CD8-positive, alpha-beta T cell (primary cell): ENCODE measurements at regions of chr3 and their contacts with region 1.

Region 1: GRCh38 chr3:38346587-38347410 is at the start of gene XYLB:
- DNase-seq: peak; percentile 43 to 87 (median 71)
- ATAC-seq: peak; percentile 95
- H3K4me3 ChIP-seq: peak within 1 kb of the TSS; percentile 51 to 83
- H3K4me3 Mint-ChIP-seq: peak within 1 kb of the TSS; percentile 85
- H3K27ac ChIP-seq: peak within 1 kb of the TSS in 1 of 2 experiments; percentile 33
- H3K27ac Mint-ChIP-seq: no peak within 1 kb of the TSS
- H3K4me1 ChIP-seq: no peaks in the 10 kb centered on the region
- H3K4me1 Mint-ChIP-seq: peaks cover 3% of the 10 kb centered on the region
- H3K27me3 ChIP-seq: no peaks in the 10 kb centered on the region
- H3K27me3 Mint-ChIP-seq: peaks cover 3% of the 10 kb centered on the region
- CTCF ChIP-seq: peak; percentile 78
- total RNA-seq, gene XYLB: 0.47 to 0.52 TPM

Region 2: DNA sequence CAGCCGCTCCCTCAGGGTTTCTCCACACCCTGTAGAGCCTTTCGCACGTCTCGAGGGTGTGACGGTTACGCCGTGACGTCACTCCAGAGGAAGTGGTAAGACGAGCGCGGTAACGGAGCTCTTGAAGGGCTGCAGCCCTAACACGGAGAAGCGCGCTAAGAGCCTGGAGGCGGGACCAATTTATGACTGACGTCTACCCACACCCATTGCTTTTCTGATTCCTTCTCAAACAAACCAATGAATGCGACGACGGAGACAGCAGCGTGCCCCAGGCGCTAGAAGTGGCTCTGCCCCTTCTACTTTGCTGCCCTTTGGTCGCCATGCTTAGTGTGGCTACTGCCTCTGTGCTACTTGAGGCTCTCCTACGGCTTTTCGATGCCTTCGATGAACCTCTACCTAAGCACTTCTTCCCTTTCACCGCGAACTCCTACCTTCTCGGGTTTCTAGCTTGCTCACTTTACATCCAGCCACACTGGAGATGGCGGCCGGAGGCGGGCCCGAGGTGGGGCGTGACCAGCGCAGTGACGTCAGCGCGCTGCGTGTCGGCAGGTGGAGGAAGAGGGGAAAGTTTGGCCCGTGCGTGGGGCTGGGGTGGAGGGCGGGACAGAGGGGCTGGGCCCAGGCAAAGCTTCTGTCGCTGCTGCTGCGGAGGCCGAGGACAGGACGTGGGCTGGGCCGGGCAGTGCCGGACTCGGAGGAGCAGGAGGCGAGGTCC is 181.7 kb before region 1 on chr3 and contains the start of gene OXSR1:
- CTCF ChIA-PET with region 1: no interaction called
- POLR2A ChIA-PET with region 1: no interaction called
- intact Hi-C with region 1: loop called in 1 of 2 experiments (anchors 2 kb)
- DNase-seq: peak; percentile 91 to 100 (median 97)
- ATAC-seq: peak; percentile 89
- H3K4me3 ChIP-seq: peak within 1 kb of the TSS; percentile 76 to 84
- H3K4me3 Mint-ChIP-seq: peak within 1 kb of the TSS; percentile 91
- H3K27ac ChIP-seq: peak within 1 kb of the TSS; percentile 94 to 99
- H3K27ac Mint-ChIP-seq: peak within 1 kb of the TSS; percentile 100
- H3K4me1 ChIP-seq: peaks cover 23% of the 10 kb centered on the region
- H3K4me1 Mint-ChIP-seq: peaks cover 46% of the 10 kb centered on the region
- H3K27me3 ChIP-seq: no peaks in the 10 kb centered on the region
- H3K27me3 Mint-ChIP-seq: no peaks in the 10 kb centered on the region
- CTCF ChIP-seq: no peak
- total RNA-seq, gene OXSR1: 45.4 to 45.6 TPM

Region 3: GRCh38 chr3:38374221-38374620 is 27.4 kb after region 1 on chr3:
- CTCF ChIA-PET with region 1: interaction called, 15 read pairs
- POLR2A ChIA-PET with region 1: no interaction called
- intact Hi-C with region 1: no loop called
- DNase-seq: peak in 7 of 9 experiments; percentile 6 to 60 (median 31)
- ATAC-seq: peak; percentile 44
- H3K4me3 ChIP-seq: peak overlapping the region in 1 of 2 experiments; percentile 18
- H3K4me3 Mint-ChIP-seq: peak overlapping the region; percentile 66
- H3K27ac ChIP-seq: no peak overlapping the region
- H3K27ac Mint-ChIP-seq: peak overlapping the region; percentile 57
- H3K4me1 ChIP-seq: peaks cover 26% of the 10 kb centered on the region
- H3K4me1 Mint-ChIP-seq: peaks cover 28% of the 10 kb centered on the region
- H3K27me3 ChIP-seq: no peaks in the 10 kb centered on the region
- H3K27me3 Mint-ChIP-seq: no peaks in the 10 kb centered on the region
- CTCF ChIP-seq: no peak

Region 4: GRCh38 chr3:38453075-38453912 is 106.5 kb after region 1 on chr3 and contains the start of gene ACVR2B:
- CTCF ChIA-PET with region 1: interaction called, 20 read pairs
- POLR2A ChIA-PET with region 1: interaction called, 11 read pairs
- intact Hi-C with region 1: no loop called
- DNase-seq: peak; percentile 15 to 82 (median 66)
- ATAC-seq: peak; percentile 62
- H3K4me3 ChIP-seq: peak within 1 kb of the TSS; percentile 55 to 62
- H3K4me3 Mint-ChIP-seq: peak within 1 kb of the TSS; percentile 98
- H3K27ac ChIP-seq: peak within 1 kb of the TSS in 1 of 2 experiments; percentile 32
- H3K27ac Mint-ChIP-seq: peak within 1 kb of the TSS; percentile 92
- H3K4me1 ChIP-seq: peaks cover 18% of the 10 kb centered on the region
- H3K4me1 Mint-ChIP-seq: peaks cover 30% of the 10 kb centered on the region
- H3K27me3 ChIP-seq: peaks cover 0 to 3% of the 10 kb centered on the region in 2 experiments
- H3K27me3 Mint-ChIP-seq: no peaks in the 10 kb centered on the region
- CTCF ChIP-seq: no peak
- total RNA-seq, gene ACVR2B: 2.1 to 3.0 TPM

Region 5: GRCh38 chr3:38468782-38469181 is 122.0 kb after region 1 on chr3:
- CTCF ChIA-PET with region 1: interaction called, 16 read pairs
- POLR2A ChIA-PET with region 1: no interaction called
- intact Hi-C with region 1: no loop called
- DNase-seq: no peak
- ATAC-seq: no peak
- H3K4me3 ChIP-seq: no peak overlapping the region
- H3K4me3 Mint-ChIP-seq: no peak overlapping the region
- H3K27ac ChIP-seq: no peak overlapping the region
- H3K27ac Mint-ChIP-seq: no peak overlapping the region
- H3K4me1 ChIP-seq: no peaks in the 10 kb centered on the region
- H3K4me1 Mint-ChIP-seq: peaks cover 24% of the 10 kb centered on the region
- H3K27me3 ChIP-seq: no peaks in the 10 kb centered on the region
- H3K27me3 Mint-ChIP-seq: no peaks in the 10 kb centered on the region
- CTCF ChIP-seq: no peak

Region 6: GRCh38 chr3:38487323-38487722 is 140.5 kb after region 1 on chr3:
- CTCF ChIA-PET with region 1: interaction called, 168 read pairs
- POLR2A ChIA-PET with region 1: no interaction called
- intact Hi-C with region 1: no loop called
- DNase-seq: no peak
- ATAC-seq: no peak
- H3K4me3 ChIP-seq: no peak overlapping the region
- H3K4me3 Mint-ChIP-seq: no peak overlapping the region
- H3K27ac ChIP-seq: no peak overlapping the region
- H3K27ac Mint-ChIP-seq: peak overlapping the region; percentile 16
- H3K4me1 ChIP-seq: no peaks in the 10 kb centered on the region
- H3K4me1 Mint-ChIP-seq: no peaks in the 10 kb centered on the region
- H3K27me3 ChIP-seq: no peaks in the 10 kb centered on the region
- H3K27me3 Mint-ChIP-seq: no peaks in the 10 kb centered on the region
- CTCF ChIP-seq: no peak